Aorta (tissue), 5 donors: ENCODE measurements at regions of chr15 and their contacts with region 1.

Region 1: GRCh38 chr15:59372352-59373211 is at the start of gene MYO1E:
- DNase-seq: peak; percentile 90 to 93
- ATAC-seq: peak; percentile 96
- H3K4me3 ChIP-seq: peak within 1 kb of the TSS; percentile 93 to 95
- H3K27ac ChIP-seq: peak within 1 kb of the TSS; percentile 77 to 93
- H3K4me1 ChIP-seq: peaks cover 3 to 11% of the 10 kb centered on the region in 2 donors
- H3K27me3 ChIP-seq: no peaks in the 10 kb centered on the region
- total RNA-seq, gene MYO1E: 163 to 225 TPM

Region 2: GRCh38 chr15:59174835-59175831 is 197.4 kb before region 1 on chr15:
- intact Hi-C with region 1: loop called in 1 of 2 experiments (anchors 2 kb)
- DNase-seq: peak in 1 of 2 donors; percentile 68
- ATAC-seq: peak; percentile 59
- H3K4me3 ChIP-seq: no peak overlapping the region
- H3K27ac ChIP-seq: no peak overlapping the region
- H3K4me1 ChIP-seq: peaks cover 0 to 5% of the 10 kb centered on the region in 2 donors
- H3K27me3 ChIP-seq: no peaks in the 10 kb centered on the region

Region 3: DNA sequence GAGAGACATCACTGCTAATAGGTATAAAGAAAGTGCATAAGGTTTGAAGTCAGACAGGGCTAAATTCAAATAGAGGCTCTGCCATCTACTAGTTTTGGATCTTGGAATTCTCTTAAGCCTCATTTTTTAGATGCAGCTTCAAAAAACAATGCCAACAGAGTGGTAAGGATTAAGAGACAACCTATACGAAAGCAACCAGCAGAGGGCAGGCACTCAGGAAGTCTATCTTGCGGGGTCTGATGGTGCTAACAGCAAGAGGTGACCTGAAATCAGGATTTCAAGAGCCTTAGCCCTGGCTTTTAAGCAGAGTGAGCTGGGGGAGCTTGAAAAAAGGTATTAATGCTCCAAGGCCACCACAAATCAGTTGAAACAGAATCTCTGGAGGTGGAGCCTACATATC is 125.2 kb before region 1 on chr15:
- intact Hi-C with region 1: loop called (anchors 5 kb)
- DNase-seq: peak in 1 of 2 donors; percentile 64
- ATAC-seq: no peak
- H3K4me3 ChIP-seq: no peak overlapping the region
- H3K27ac ChIP-seq: no peak overlapping the region
- H3K4me1 ChIP-seq: no peaks in the 10 kb centered on the region
- H3K27me3 ChIP-seq: no peaks in the 10 kb centered on the region

Region 4: GRCh38 chr15:59299929-59300617 is 72.5 kb before region 1 on chr15:
- intact Hi-C with region 1: loop called (anchors 5 kb)
- DNase-seq: peak; percentile 80 to 88
- ATAC-seq: peak; percentile 84
- H3K4me3 ChIP-seq: no peak overlapping the region
- H3K27ac ChIP-seq: peak overlapping the region in 1 of 2 donors; percentile 28
- H3K4me1 ChIP-seq: peaks cover 0 to 3% of the 10 kb centered on the region in 2 donors
- H3K27me3 ChIP-seq: no peaks in the 10 kb centered on the region

Region 5: GRCh38 chr15:59313641-59314332 is 58.8 kb before region 1 on chr15:
- intact Hi-C with region 1: loop called (anchors 5 kb)
- DNase-seq: peak; percentile 94 to 96
- ATAC-seq: peak; percentile 89
- H3K4me3 ChIP-seq: no peak overlapping the region
- H3K27ac ChIP-seq: peak overlapping the region; percentile 91 to 96
- H3K4me1 ChIP-seq: peaks cover 8 to 17% of the 10 kb centered on the region in 2 donors
- H3K27me3 ChIP-seq: no peaks in the 10 kb centered on the region